ENCODE measurements at regions of chr19 and their contacts with region 1.

Region 1: DNA sequence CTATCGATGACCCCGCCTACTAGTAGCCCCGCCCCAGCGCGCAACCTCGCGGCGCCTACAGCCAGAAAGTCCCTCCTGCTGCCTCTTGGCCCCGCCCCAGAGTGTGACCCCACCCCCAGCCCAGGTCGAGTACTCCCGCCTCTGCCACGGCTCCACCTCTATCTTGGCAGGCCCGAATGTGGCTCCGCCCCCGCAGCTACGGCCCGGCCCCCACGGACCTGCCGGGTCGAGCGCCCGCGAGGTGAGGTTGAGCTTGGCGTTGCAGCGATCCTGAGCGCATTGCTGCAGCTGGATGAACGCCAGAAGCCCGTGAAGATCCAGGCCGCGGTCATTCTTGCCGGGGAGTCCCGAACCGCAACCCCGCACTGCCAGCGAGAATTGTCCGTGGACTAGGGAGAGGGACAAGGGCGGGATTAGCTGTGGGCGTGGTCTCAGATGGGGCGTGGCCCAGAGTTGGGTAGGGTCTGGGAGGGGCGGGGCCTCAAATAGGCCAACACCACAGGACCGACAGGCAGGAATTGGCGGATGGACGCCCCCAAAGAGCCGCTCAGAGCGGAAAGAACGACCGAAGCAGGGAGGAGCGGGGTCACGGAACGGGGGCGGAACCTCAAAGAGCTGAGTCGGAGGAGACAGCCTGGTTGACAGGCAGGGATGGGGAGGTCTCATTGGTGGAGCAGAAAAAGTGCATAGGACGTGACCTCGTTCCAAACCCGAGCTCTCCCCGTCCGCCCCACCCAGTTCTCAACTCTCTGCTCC is 1.8 kb downstream of the LYPD3 start:
- DNase-seq: peak; percentile 98 to 99
- ATAC-seq: peak; percentile 87 to 96 (median 87)
- H3K4me3 ChIP-seq: peak overlapping the region; percentile 56
- H3K4me3 Mint-ChIP-seq: peak overlapping the region; percentile 94
- H3K27ac ChIP-seq: peak overlapping the region; percentile 85
- H3K27ac Mint-ChIP-seq: peak overlapping the region; percentile 90 to 95
- H3K4me1 ChIP-seq: peaks cover 25% of the 10 kb centered on the region
- H3K4me1 Mint-ChIP-seq: peaks cover 5 to 37% of the 10 kb centered on the region in 2 donors
- H3K27me3 ChIP-seq: no peaks in the 10 kb centered on the region
- H3K27me3 Mint-ChIP-seq: peaks cover 0 to 9% of the 10 kb centered on the region in 2 donors
- CTCF ChIP-seq: no peak

Region 2: DNA sequence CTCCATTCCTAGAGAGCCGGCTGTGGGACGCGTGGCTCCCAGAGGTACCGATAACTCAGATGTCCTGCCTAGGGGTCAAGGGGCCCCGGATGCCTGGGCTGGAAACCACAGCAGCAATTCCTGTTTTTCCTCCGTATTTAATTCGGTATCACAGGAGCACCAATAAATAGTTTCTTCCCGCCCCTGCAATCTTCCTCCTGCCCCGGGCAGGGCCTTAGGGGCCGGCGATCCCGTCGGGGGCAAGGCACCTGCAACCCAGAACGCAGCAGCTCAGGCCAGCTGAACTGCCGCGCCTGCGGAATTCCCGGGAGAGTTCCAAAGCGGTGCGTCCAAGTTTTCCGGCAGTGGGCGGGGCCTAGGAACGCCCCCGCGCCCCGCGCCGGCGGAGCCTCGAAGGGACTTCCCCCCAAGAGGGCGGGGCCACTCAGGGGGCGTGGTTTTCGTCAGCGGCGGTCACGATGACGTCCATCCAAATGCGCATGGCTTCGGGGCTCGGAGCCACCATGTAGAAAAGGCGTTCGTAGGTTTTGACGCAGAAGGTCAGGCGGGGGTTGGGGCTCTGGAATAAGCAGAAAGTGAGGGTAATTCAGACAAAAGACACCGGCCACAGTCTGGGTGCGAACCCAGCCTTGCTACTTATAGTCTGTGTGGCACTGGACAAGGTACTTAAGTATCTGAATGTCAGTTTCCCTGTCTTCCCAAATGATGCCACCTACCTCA is 11.6 kb after region 1 on chr19:
- intact Hi-C with region 1: loop called (anchors 1 kb)
- DNase-seq: peak; percentile 98 to 99
- ATAC-seq: peak; percentile 95 to 98 (median 97)
- H3K4me3 ChIP-seq: peak overlapping the region; percentile 45
- H3K4me3 Mint-ChIP-seq: peak overlapping the region; percentile 89
- H3K27ac ChIP-seq: peak overlapping the region; percentile 86
- H3K27ac Mint-ChIP-seq: peak overlapping the region; percentile 94 to 97
- H3K4me1 ChIP-seq: peaks cover 14% of the 10 kb centered on the region
- H3K4me1 Mint-ChIP-seq: peaks cover 6 to 17% of the 10 kb centered on the region in 2 donors
- H3K27me3 ChIP-seq: no peaks in the 10 kb centered on the region
- H3K27me3 Mint-ChIP-seq: no peaks in the 10 kb centered on the region
- CTCF ChIP-seq: no peak

Region 3: DNA sequence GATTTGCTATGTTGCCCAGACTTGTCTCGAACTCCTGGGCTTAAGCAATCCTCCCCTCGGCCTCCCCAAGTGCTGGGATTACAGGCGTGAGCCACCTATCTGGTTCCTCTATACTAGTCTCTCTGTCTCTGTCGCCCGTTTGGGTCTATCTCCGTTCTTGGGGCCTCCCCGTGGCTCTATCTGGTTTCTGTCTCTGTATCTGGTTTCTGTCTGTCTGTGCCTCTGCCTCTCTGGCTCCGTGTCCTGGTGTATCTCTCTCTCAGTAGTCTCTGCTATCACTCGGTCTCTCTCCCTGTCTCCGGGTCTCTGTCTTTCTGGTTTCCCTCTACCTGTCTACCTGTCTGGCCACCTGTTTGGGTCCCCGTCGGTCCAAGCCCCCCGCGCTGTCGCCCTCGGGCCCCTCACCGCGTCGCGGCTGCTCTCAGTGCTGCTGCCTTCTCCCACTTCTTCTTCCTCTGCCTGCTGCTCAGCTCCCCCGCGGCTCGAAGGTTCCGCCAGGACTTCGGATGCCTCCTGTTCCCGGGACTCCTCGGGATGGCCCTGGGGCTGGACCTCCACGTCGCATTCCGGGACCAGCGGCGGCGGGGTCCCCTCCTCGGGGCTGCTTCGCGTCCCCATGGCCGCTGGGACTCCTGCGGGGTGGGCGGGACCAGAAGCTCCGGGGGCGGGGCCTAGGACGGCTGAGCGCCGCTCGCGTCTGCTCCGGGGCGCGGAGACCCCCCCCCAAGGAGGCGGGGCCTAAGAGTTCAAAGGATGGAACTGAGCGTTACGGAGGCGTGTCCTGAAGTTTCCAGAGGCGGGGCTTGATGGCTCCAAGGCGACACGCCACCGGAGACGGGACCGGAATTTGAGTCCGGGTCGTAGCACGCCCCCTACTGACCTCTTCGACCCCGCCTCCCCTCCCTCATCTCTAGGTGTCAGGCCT is 40.2 kb after region 1 on chr19:
- intact Hi-C with region 1: loop called (anchors 1 kb)
- DNase-seq: peak; percentile 96 to 98
- ATAC-seq: peak; percentile 96 to 100 (median 97)
- H3K4me3 ChIP-seq: peak overlapping the region; percentile 77
- H3K4me3 Mint-ChIP-seq: peak overlapping the region; percentile 77
- H3K27ac ChIP-seq: peak overlapping the region; percentile 72
- H3K27ac Mint-ChIP-seq: peak overlapping the region; percentile 65 to 93
- H3K4me1 ChIP-seq: peaks cover 21% of the 10 kb centered on the region
- H3K4me1 Mint-ChIP-seq: peaks cover 21 to 30% of the 10 kb centered on the region in 2 donors
- H3K27me3 ChIP-seq: no peaks in the 10 kb centered on the region
- H3K27me3 Mint-ChIP-seq: no peaks in the 10 kb centered on the region
- CTCF ChIP-seq: no peak

Region 4: GRCh38 chr19:43526884-43527859 is 63.6 kb after region 1 on chr19 and contains the start of gene ETHE1:
- intact Hi-C with region 1: loop called (anchors 2 kb)
- DNase-seq: peak; percentile 71 to 76
- ATAC-seq: peak; percentile 89 to 93 (median 91)
- H3K4me3 ChIP-seq: peak within 1 kb of the TSS; percentile 82
- H3K4me3 Mint-ChIP-seq: peak within 1 kb of the TSS; percentile 69
- H3K27ac ChIP-seq: peak within 1 kb of the TSS; percentile 75
- H3K27ac Mint-ChIP-seq: peak within 1 kb of the TSS; percentile 77 to 90
- H3K4me1 ChIP-seq: peaks cover 33% of the 10 kb centered on the region
- H3K4me1 Mint-ChIP-seq: peaks cover 24 to 27% of the 10 kb centered on the region in 2 donors
- H3K27me3 ChIP-seq: no peaks in the 10 kb centered on the region
- H3K27me3 Mint-ChIP-seq: no peaks in the 10 kb centered on the region
- CTCF ChIP-seq: no peak
- total RNA-seq, gene ETHE1: 22.0 to 25.6 (median 24.6) TPM

Region 5: GRCh38 chr19:43532962-43533545 is 69.5 kb after region 1 on chr19 and contains the start of gene ZNF575:
- intact Hi-C with region 1: loop called (anchors 1 kb)
- DNase-seq: peak; percentile 68 to 92
- ATAC-seq: peak; percentile 39 to 64 (median 54)
- H3K4me3 ChIP-seq: peak within 1 kb of the TSS; percentile 78
- H3K4me3 Mint-ChIP-seq: peak within 1 kb of the TSS; percentile 97
- H3K27ac ChIP-seq: peak within 1 kb of the TSS; percentile 77
- H3K27ac Mint-ChIP-seq: peak within 1 kb of the TSS; percentile 90 to 93
- H3K4me1 ChIP-seq: peaks cover 23% of the 10 kb centered on the region
- H3K4me1 Mint-ChIP-seq: peaks cover 30 to 34% of the 10 kb centered on the region in 2 donors
- H3K27me3 ChIP-seq: no peaks in the 10 kb centered on the region
- H3K27me3 Mint-ChIP-seq: no peaks in the 10 kb centered on the region
- CTCF ChIP-seq: no peak
- total RNA-seq, gene ZNF575: 1.9 to 5.4 (median 3.9) TPM

Region 6: DNA sequence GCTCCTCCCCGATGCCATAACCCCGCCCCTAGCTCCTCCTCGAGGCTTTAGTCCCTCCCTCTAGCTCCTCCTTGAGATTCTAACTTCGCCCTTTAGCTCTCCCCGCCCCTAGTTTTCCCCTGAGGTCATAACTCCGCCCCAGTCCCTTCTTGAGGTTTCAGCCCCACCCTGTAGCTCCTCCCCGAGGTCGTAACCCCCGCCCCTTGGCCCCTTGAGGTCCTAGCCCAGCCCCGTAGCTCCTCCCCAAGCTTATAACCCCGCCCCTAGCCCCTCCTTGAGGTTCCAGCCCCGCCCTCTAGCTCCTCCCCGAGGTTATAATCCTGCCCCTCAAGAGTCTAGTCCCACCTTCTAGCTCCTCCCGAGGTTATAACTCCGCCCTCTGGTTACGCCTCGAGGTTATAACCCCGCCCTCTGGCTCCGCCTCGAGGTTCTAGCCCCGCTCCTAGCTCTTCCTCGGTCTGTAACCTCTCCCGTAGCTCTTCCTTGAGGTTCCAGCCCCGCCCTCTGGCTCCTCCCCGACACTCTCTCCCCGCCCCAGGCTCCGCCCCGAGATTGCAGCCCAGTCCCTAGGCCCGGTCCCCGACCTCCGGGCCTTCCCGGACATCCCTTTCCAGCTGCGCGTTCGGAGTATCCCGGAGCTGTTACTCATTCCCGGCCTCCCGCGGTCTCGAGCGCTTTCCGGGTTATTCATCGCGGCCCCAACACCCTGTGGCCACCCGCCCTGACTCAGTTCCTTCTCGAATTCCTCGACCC is 205.0 kb after region 1 on chr19:
- intact Hi-C with region 1: loop called (anchors 1 kb)
- DNase-seq: peak; percentile 87 to 97
- ATAC-seq: peak; percentile 86 to 95 (median 86)
- H3K4me3 ChIP-seq: peak overlapping the region; percentile 71
- H3K4me3 Mint-ChIP-seq: peak overlapping the region; percentile 94
- H3K27ac ChIP-seq: peak overlapping the region; percentile 48
- H3K27ac Mint-ChIP-seq: peak overlapping the region; percentile 68 to 84
- H3K4me1 ChIP-seq: peaks cover 47% of the 10 kb centered on the region
- H3K4me1 Mint-ChIP-seq: peaks cover 44 to 47% of the 10 kb centered on the region in 2 donors
- H3K27me3 ChIP-seq: peaks cover 3% of the 10 kb centered on the region
- H3K27me3 Mint-ChIP-seq: peaks cover 0 to 7% of the 10 kb centered on the region in 2 donors
- CTCF ChIP-seq: no peak